H1 (cell line): ENCODE measurements at regions of chr2 and their contacts with region 1.

Region 1: DNA sequence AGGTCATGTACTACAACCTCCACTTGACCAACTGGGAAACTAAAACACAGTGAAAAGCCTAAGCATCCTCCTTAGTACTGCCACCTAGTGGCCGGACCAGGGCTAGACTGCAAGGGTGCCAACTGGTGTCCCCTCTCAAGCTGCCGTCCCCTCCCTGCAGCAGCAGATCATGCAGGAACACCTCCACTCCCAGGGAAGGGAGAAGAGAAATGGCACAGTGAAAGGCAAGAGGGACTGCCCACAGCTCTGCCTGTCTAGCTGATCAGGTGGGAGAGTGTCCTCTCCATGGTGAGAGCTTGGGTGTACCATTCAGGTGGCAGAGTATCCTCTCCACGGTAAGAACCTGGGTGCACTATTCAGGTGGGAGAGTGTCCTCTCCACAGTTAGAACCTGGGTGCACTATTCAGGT is 78.1 kb downstream of the AAK1 start:
- DNase-seq: peak; percentile 39 to 94
- H3K4me3 ChIP-seq: no peak overlapping the region
- H3K27ac ChIP-seq: no peak overlapping the region
- H3K4me1 ChIP-seq: no peaks in the 10 kb centered on the region
- H3K27me3 ChIP-seq: no peaks in the 10 kb centered on the region
- CTCF ChIP-seq: peak; percentile 84 to 98 (median 94)
- EP300 ChIP-seq: no peak
- POLR2A ChIP-seq: no peak
- RAD21 ChIP-seq: peak; percentile 54 to 68

Region 2: DNA sequence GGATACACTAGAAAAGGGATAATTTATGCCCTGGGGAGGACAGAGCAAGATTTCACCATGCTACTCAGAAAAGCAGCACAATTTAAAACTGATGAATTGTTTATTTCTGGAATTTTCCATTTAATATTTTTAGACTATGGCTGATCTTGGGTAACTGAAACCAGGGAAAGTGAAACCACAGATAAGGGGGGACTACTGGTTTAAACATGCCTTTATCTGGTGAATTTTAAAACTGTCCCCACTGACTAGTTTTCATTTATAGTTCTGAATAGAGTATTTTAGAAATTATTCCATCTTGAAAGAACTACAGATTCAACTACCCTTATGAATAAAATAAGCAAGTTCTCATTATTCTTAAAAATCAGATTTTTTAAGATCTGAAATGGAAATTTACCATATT is 143.2 kb before region 1 on chr2:
- CTCF ChIA-PET with region 1: no interaction called
- POLR2A ChIA-PET with region 1: no interaction called
- DNase-seq: no peak
- H3K4me3 ChIP-seq: no peak overlapping the region
- H3K27ac ChIP-seq: no peak overlapping the region
- H3K4me1 ChIP-seq: no peaks in the 10 kb centered on the region
- H3K27me3 ChIP-seq: no peaks in the 10 kb centered on the region
- CTCF ChIP-seq: no peak
- EP300 ChIP-seq: no peak
- POLR2A ChIP-seq: no peak
- RAD21 ChIP-seq: no peak

Region 3: GRCh38 chr2:69581774-69582581 is 16.5 kb after region 1 on chr2:
- CTCF ChIA-PET with region 1: interaction called, 45 read pairs
- POLR2A ChIA-PET with region 1: interaction called, 3 read pairs
- DNase-seq: no peak
- H3K4me3 ChIP-seq: no peak overlapping the region
- H3K27ac ChIP-seq: no peak overlapping the region
- H3K4me1 ChIP-seq: peaks cover 8 to 27% (median 12%) of the 10 kb centered on the region in 4 experiments
- H3K27me3 ChIP-seq: no peaks in the 10 kb centered on the region
- CTCF ChIP-seq: no peak
- EP300 ChIP-seq: no peak
- POLR2A ChIP-seq: no peak
- RAD21 ChIP-seq: no peak

Region 4: GRCh38 chr2:69597105-69597504 is 31.7 kb after region 1 on chr2:
- CTCF ChIA-PET with region 1: interaction called, 11 read pairs
- POLR2A ChIA-PET with region 1: no interaction called
- DNase-seq: no peak
- H3K4me3 ChIP-seq: no peak overlapping the region
- H3K27ac ChIP-seq: no peak overlapping the region
- H3K4me1 ChIP-seq: no peaks in the 10 kb centered on the region
- H3K27me3 ChIP-seq: no peaks in the 10 kb centered on the region
- CTCF ChIP-seq: no peak
- EP300 ChIP-seq: no peak
- POLR2A ChIP-seq: no peak
- RAD21 ChIP-seq: no peak

Region 5: DNA sequence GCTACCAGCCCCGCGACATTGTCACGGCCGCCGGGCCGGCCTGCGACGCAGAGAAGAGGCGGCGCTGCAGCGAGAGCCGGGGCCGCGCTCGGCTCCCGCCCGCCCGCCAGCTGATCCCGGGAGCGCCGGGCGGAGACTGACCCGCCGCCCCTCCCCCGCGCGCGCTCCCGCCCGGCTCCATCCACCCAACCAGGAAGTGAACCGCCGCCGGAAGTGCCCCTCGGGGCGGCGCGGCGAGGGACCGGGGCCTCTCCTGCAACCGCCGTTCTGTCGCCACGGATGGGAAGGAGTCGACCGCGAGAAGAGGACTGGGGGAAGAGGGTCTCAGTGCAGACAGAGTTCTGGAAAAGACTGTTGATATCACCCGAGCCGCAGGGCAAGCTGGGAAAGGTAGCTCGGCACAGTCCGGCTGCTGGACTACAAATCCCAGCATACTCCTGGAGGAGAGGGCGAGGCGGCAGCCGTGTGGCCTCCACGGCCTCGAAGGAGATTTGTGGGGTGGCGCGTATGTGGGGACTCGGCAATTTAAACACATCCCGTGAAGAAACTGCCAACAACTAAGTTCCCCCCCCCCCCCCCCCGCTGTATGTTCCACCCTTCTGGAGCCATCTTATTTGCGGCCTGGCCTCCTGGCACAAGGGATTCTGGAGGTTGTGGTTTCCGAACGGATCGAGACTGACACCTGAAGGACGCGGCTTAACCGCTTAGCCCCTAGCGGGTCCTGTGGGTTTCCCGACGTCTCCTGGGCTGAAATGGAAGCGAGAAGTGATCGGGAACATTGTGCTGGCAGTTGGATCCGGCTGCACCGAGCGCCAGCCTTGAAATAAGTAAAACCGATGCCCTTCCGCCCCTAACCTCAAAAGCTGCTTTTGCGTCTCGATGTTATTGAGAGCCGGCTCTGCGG is 78.4 kb after region 1 on chr2 and contains the start of gene AAK1:
- CTCF ChIA-PET with region 1: interaction called, 18 read pairs
- POLR2A ChIA-PET with region 1: no interaction called
- DNase-seq: peak in 1 of 2 experiments; percentile 90
- H3K4me3 ChIP-seq: peak within 1 kb of the TSS; percentile 81 to 100 (median 97)
- H3K27ac ChIP-seq: peak within 1 kb of the TSS; percentile 73; the same call in 1 of the 2 replicates
- H3K4me1 ChIP-seq: peaks cover 4 to 17% (median 8%) of the 10 kb centered on the region in 4 experiments; a peak in 6 of 7 replicates
- H3K27me3 ChIP-seq: no peaks in the 10 kb centered on the region
- CTCF ChIP-seq: 0 out of 4 replicates have a peak, but pooled peaks of 1 of the 3 experiments have one; percentile 10
- EP300 ChIP-seq: peak in 1 of 2 experiments; percentile 38; a peak in 1 of 3 replicates
- POLR2A ChIP-seq: peak in 1 of 2 experiments; percentile 51; a peak in 2 of 3 replicates
- RAD21 ChIP-seq: no peak
- total RNA-seq, gene AAK1: 40.5 and 48.1 TPM in 2 replicates

Region 6: GRCh38 chr2:69724540-69725159 is 159.2 kb after region 1 on chr2:
- CTCF ChIA-PET with region 1: interaction called, 128 read pairs
- POLR2A ChIA-PET with region 1: interaction called, 3 read pairs
- DNase-seq: peak; percentile 50 to 97
- H3K4me3 ChIP-seq: peak overlapping the region in 2 of 4 experiments; percentile 4 to 49; a peak in 3 of 8 replicates
- H3K27ac ChIP-seq: no peak overlapping the region
- H3K4me1 ChIP-seq: peaks cover 0 to 2% (median 0%) of the 10 kb centered on the region in 4 experiments; a peak in 1 of 7 replicates
- H3K27me3 ChIP-seq: no peaks in the 10 kb centered on the region
- CTCF ChIP-seq: peak; percentile 90 to 95 (median 91)
- EP300 ChIP-seq: no peak
- POLR2A ChIP-seq: no peak
- RAD21 ChIP-seq: peak; percentile 95 to 98